CD8-positive, alpha-beta memory T cell (primary cell): ENCODE measurements at regions of chr3 and their contacts with region 1.

Region 1: DNA sequence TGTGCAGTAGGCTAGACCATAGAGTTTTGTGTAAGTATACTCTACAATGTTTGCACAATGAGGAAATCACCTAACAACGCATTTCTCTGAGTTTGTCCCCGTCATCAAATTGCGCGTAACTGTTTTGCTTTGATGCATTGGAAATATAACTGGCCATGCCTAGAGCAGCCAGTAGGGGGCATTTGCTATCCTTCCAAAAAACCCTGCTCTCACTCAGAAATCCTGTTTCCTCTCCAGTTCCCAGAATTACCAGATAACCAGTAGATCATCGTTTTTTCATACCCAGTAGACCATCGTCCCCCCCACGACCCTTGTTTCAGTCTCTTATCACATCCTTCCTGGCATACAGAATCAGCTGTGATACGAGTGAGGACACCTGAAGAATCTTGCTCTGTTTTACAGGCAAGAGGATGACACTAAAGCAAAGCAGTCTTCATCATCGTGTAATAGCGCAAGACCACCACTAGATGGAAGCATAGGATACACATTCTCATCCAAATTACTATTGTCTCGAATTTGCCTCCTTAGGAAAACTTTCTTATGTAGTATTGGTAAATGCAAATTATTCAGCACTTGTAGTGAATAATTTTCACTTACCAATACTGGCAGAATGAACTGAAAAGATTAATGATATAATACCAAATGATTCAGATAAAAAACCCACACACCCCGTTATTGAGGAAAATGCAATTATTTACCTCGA is 4.4 kb upstream of the GABRR3 start:
- DNase-seq: peak; percentile 44 to 86 (median 75)
- H3K4me3 ChIP-seq: peak overlapping the region; percentile 62
- H3K4me3 Mint-ChIP-seq: peak overlapping the region; percentile 60 to 92 (median 87)
- H3K27ac ChIP-seq: no peak overlapping the region
- H3K27ac Mint-ChIP-seq: peak overlapping the region; percentile 64 to 98 (median 92)
- H3K4me1 ChIP-seq: no peaks in the 10 kb centered on the region
- H3K4me1 Mint-ChIP-seq: peaks cover 0 to 8% (median 7%) of the 10 kb centered on the region in 3 donors
- H3K27me3 ChIP-seq: no peaks in the 10 kb centered on the region
- H3K27me3 Mint-ChIP-seq: peaks cover 9 to 30% of the 10 kb centered on the region in 2 donors

Region 2: GRCh38 chr3:98246142-98246541 is 206.7 kb after region 1 on chr3:
- CTCF ChIA-PET with region 1: no interaction called
- POLR2A ChIA-PET with region 1: no interaction called
- DNase-seq: no peak
- H3K4me3 ChIP-seq: no peak overlapping the region
- H3K4me3 Mint-ChIP-seq: no peak overlapping the region
- H3K27ac ChIP-seq: no peak overlapping the region
- H3K27ac Mint-ChIP-seq: no peak overlapping the region
- H3K4me1 ChIP-seq: no peaks in the 10 kb centered on the region
- H3K4me1 Mint-ChIP-seq: no peaks in the 10 kb centered on the region
- H3K27me3 ChIP-seq: no peaks in the 10 kb centered on the region
- H3K27me3 Mint-ChIP-seq: peaks cover 1 to 15% of the 10 kb centered on the region in 2 donors

Region 3: DNA sequence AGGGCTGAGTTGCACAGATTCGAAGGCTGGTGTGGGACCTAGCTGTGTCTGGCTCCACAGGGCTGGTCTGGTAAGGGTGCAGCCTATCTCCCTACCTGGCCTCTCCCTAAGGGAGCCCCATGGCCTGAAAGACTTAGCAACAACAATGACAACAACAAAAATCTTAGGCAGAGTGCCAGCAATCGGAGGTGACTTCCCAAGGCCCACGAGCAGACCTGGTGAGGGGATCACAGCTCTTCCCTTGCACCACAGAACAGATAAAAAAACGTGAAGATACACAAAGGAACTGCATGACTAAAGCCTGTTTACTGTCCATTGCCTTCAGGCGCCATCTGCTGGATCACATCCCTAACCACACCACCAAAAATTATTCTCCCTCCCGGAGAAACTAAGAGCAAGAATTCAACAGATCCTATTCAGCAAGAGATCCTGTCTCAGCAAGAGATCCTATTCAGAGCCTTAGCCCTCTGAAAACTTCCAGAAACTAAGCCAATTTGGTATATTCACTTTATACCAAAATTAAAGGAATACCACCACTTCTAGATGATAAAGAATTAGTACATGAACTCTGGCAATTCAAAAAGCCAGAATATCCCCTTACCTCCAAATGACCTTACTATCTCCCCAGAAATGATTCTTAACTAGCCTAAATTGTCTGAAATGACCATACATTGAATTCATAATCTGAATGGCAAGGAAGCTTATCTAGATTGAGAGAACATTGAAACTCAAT is 290.1 kb after region 1 on chr3:
- CTCF ChIA-PET with region 1: interaction called, 14 read pairs
- POLR2A ChIA-PET with region 1: no interaction called
- DNase-seq: peak in 4 of 5 donors; percentile 11 to 61 (median 22)
- H3K4me3 ChIP-seq: no peak overlapping the region
- H3K4me3 Mint-ChIP-seq: no peak overlapping the region
- H3K27ac ChIP-seq: no peak overlapping the region
- H3K27ac Mint-ChIP-seq: peak overlapping the region in 1 of 8 donors; percentile 2
- H3K4me1 ChIP-seq: no peaks in the 10 kb centered on the region
- H3K4me1 Mint-ChIP-seq: peaks cover 3 to 6% (median 5%) of the 10 kb centered on the region in 3 donors
- H3K27me3 ChIP-seq: no peaks in the 10 kb centered on the region
- H3K27me3 Mint-ChIP-seq: peaks cover 4 to 7% of the 10 kb centered on the region in 2 donors